Right ventricle myocardium inferior (tissue), 1 donor: ENCODE measurements at regions of chr2 and their contacts with region 1.

Region 1: DNA sequence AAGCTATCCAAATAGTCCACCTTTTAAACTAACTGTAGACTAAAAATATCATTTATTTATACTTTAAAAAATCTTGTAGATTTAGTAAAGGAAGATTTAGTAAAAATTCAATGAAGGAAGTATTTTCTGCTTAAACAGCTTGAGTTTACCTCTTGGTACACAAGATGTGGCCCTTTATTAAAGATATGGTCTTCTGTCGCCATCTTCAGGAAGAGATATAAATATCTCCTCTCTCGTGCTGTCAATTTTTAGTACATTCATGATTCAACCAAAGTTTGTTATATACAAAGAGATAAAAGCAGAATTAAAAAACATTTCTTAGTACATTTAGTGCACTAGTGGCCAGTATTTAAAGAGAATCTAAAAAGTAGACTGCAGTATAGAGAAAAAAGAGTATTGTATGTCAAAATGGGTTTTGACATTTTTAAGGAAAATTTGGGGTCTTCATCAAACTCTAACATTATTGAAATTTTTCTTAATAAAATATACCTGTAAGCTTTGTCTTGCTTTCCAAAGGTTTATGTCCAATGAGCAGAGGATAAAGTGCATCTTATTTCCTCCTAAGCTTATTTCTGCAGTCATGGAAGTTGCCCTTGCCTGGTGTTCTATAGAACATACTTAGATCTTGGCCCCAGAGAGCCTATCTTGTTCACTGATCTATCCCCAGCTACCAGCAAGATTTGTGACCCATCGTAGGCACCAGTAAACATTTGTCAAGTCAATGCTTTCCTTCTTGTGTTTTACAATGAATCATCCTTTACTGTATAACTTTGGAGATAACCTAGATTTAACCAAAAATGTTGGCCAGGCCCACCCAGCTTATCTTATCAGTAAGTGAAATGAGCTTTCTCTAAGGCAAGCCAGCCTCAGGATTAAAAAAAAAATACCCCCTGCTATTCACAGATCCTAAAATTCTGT is 18.5 kb upstream of the EML6 start:
- DNase-seq: no peak
- ATAC-seq: no peak

Region 2: DNA sequence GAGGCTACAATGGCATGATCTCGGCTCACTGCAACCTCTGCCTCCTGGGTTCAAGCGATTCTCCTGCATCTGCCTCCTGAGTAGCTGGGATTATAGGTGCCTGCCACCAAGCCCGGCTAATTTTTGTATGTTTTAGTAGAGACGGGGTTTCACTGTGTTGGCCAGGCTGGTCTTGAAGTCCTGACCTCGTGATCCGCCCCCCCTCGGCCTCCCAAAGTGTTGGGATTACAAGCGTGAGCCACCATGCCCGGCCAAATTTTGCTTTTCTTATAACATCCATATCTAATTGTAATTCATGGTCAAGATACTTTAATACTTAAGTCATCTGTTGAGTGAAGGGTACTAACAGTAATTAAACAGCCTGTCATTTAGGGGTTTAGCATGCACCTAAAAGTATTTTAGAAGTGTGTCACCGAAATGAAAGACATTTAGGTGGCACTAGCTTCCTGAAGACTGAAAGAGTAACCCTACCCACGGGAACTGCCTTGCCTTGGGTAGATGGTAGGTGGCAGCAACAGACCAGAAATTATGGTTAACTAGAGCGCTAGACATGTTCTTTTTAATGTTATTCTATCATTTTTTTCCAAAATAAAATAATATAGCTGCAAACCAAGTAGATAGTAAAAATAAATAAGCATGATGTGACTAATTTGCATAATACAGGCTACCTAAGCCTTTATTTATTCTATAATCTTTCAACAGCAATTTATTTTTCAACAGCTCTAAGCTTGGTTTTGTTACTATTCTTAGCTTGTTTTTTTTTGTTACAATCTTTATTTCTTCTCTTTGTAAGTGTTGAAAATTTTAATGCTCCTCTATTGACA is 598.1 kb before region 1 on chr2:
- intact Hi-C with region 1: loop called (anchors 10 kb)
- DNase-seq: no peak
- ATAC-seq: peak; percentile 52

Region 3: DNA sequence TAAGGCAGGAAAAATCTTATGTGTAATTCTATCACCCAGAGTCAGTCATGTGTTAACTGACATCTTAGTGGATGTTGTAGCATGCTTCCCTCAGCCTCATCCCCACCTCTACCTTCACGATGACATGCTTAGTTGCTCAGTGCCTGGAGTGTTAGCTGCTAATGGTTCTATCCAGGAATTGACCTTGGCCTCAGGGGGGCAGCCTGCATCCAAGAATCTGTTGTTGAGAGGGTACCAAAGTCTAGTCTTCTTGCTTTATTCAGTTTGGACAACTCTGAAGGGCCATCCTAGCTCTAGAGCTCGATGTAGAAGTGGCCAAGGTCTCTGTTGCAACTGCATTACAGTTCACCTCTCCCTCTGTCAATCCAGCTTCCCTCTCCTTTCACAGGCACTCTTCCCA is 528.4 kb before region 1 on chr2:
- intact Hi-C with region 1: loop called (anchors 2 kb)
- DNase-seq: no peak
- ATAC-seq: peak; percentile 70

Region 4: DNA sequence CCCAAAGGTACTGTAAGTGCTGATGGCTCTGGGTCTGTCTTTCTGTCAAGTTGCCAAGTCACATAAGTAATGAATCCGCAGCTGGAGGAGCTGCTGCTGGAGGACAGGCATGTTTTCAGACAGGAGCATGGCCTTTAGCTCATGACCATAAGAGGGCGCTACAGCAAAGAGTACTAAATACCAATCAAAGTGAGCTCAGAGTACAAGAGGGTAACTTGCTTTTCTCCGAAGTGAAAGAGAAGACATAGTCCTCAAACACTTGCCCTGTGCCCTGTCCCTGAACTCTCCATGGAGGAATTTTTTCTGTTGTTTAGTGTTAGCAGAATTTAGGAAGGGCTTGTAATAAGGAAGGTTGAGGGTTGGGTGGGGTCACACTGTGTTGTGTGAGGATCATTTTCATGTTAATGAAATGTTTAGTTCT is 39.5 kb before region 1 on chr2:
- intact Hi-C with region 1: loop called (anchors 5 kb)
- DNase-seq: no peak
- ATAC-seq: no peak